Naive thymus-derived CD4-positive, alpha-beta T cell (primary cell): ENCODE measurements at regions of chr17 and their contacts with region 1.

Region 1: DNA sequence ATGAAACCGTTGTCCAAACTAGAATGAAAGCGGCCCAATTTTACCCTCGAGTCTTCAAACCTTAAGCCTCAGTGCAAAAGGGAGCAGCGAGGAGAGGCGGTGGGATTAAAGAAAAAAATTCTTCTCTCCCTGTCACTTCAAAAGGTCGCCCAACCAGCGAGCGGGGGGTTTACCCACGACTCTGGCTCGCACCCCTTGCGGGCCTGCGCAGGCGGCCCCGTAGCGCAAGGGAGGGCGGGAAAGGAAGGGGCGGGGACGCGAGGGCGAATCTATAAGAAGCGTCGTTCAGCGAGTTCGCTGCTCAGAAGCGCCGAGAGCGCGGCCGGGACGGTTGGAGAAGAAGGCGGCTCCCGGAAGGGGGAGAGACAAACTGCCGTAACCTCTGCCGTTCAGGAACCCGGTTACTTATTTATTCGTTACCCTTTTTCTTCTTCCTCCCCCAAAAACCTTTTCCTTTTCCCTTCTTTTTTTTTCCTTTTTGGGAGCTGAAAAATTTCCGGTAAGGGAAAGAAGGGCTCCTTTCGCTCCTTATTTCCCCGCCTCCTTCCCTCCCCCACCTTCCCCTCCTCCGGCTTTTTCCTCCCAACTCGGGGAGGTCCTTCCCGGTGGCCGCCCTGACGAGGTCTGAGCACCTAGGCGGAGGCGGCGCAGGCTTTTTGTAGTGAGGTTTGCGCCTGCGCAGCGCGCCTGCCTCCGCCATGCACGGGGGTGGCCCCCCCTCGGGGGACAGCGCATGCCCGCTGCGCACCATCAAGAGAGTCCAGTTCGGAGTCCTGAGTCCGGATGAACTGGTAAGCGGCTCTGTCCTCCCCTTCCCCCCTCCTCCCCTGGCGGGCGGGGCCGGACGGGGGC is at the start of gene POLR2A:
- DNase-seq: peak; percentile 97 to 99 (median 99)
- ATAC-seq: peak; percentile 80
- H3K4me3 ChIP-seq: peak within 1 kb of the TSS; percentile 100
- H3K4me3 Mint-ChIP-seq: peak within 1 kb of the TSS; percentile 86 to 100 (median 98)
- H3K27ac ChIP-seq: peak within 1 kb of the TSS; percentile 97
- H3K27ac Mint-ChIP-seq: peak within 1 kb of the TSS; percentile 99 to 100 (median 100)
- H3K4me1 ChIP-seq: peaks cover 38 to 55% of the 10 kb centered on the region in 2 donors
- H3K4me1 Mint-ChIP-seq: peaks cover 60 to 81% (median 72%) of the 10 kb centered on the region in 7 donors
- H3K27me3 ChIP-seq: no peaks in the 10 kb centered on the region
- H3K27me3 Mint-ChIP-seq: no peaks in the 10 kb centered on the region
- total RNA-seq, gene POLR2A: 165 to 501 (median 225) TPM

Region 2: DNA sequence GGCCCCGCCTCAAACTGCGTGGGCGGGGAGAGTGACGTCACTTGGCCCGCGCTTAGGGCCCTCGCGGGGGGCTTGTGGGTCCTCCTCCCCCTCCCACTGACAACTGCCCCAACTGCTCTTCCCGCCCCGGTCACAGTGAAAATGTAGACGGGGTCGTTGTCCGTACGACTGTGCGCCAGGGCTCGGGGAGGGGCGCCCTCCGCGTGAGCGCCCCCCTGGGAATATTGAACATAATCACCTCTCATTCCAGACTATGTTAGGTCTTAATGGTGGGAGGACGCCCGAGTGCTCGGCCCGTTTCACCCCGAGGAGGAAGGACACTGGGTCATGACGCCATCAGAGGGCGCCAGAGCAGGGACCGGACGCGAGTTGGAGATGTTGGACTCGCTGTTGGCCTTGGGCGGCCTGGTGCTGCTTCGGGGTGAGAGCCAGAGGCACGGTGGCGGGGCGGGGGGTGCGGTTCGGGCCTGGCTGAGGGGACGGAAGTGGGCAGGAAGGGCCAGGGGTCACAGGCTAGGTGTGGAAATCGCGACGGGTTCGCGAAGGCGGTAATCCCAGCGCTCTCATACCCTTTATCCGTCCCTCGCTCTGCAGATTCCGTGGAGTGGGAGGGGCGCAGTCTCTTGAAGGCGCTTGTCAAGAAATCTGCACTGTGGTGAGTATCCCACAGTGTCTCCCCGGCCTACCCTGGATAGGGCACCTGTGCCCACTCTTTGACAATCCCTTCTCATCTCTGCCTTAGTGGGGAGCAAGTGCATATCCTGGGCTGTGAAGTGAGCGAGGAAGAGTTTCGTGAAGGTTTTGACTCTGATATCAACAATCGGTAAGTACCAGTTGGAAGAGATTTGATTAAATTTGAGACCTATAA is 231.9 kb before region 1 on chr17 and contains the start of gene ELP5:
- CTCF ChIA-PET with region 1: no interaction called
- POLR2A ChIA-PET with region 1: interaction called, 4 read pairs
- intact Hi-C with region 1: loop called (anchors 1 kb)
- DNase-seq: peak in 5 of 9 donors; percentile 73 to 90 (median 83)
- ATAC-seq: peak; percentile 69
- H3K4me3 ChIP-seq: peak within 1 kb of the TSS; percentile 91
- H3K4me3 Mint-ChIP-seq: peak within 1 kb of the TSS; percentile 85 to 98 (median 96)
- H3K27ac ChIP-seq: peak within 1 kb of the TSS; percentile 94
- H3K27ac Mint-ChIP-seq: peak within 1 kb of the TSS; percentile 95 to 100 (median 99)
- H3K4me1 ChIP-seq: peaks cover 22 to 32% of the 10 kb centered on the region in 2 donors
- H3K4me1 Mint-ChIP-seq: peaks cover 29 to 51% (median 42%) of the 10 kb centered on the region in 7 donors
- H3K27me3 ChIP-seq: no peaks in the 10 kb centered on the region
- H3K27me3 Mint-ChIP-seq: peaks cover 0 to 4% (median 0%) of the 10 kb centered on the region in 5 donors
- total RNA-seq, gene ELP5: 26.9 to 49.1 (median 32.9) TPM

Region 3: GRCh38 chr17:7394452-7395191 is 89.7 kb before region 1 on chr17 and contains the start of gene PLSCR3:
- CTCF ChIA-PET with region 1: no interaction called
- POLR2A ChIA-PET with region 1: interaction called, 7 read pairs
- intact Hi-C with region 1: loop called in 1 of 2 experiments (anchors 2 kb)
- DNase-seq: peak; percentile 68 to 91 (median 82)
- ATAC-seq: peak; percentile 94
- H3K4me3 ChIP-seq: peak within 1 kb of the TSS; percentile 94
- H3K4me3 Mint-ChIP-seq: peak within 1 kb of the TSS; percentile 93 to 97 (median 95)
- H3K27ac ChIP-seq: peak within 1 kb of the TSS; percentile 87
- H3K27ac Mint-ChIP-seq: peak within 1 kb of the TSS; percentile 85 to 97 (median 92)
- H3K4me1 ChIP-seq: peaks cover 7 to 25% of the 10 kb centered on the region in 2 donors
- H3K4me1 Mint-ChIP-seq: peaks cover 25 to 46% (median 27%) of the 10 kb centered on the region in 7 donors
- H3K27me3 ChIP-seq: no peaks in the 10 kb centered on the region
- H3K27me3 Mint-ChIP-seq: no peaks in the 10 kb centered on the region
- total RNA-seq, gene PLSCR3: 74.8 to 142 (median 85.0) TPM

Region 4: DNA sequence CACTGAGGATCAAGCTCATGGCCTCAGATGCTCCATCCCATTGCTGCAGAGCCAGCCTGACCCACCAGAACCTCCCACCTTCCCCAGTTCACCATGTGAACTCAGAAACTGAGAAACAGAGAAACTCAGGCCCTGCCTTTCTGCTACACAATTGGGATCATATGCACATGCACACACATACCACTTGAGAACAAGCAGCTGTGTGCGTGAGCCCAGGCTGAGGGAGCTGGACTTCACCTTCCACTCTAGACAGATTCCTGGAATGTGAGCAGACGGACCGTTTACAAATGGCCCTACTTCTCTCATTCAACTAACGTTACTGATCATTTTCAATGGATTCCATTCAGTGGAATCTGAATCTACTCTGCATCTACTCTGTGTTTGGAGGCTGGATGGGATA is 60.6 kb before region 1 on chr17:
- CTCF ChIA-PET with region 1: no interaction called
- POLR2A ChIA-PET with region 1: no interaction called
- intact Hi-C with region 1: no loop called
- DNase-seq: no peak
- ATAC-seq: no peak
- H3K4me3 ChIP-seq: no peak overlapping the region
- H3K4me3 Mint-ChIP-seq: no peak overlapping the region
- H3K27ac ChIP-seq: no peak overlapping the region
- H3K27ac Mint-ChIP-seq: peak overlapping the region in 1 of 9 donors; percentile 72
- H3K4me1 ChIP-seq: no peaks in the 10 kb centered on the region
- H3K4me1 Mint-ChIP-seq: no peaks in the 10 kb centered on the region
- H3K27me3 ChIP-seq: no peaks in the 10 kb centered on the region
- H3K27me3 Mint-ChIP-seq: peaks cover 0 to 3% (median 0%) of the 10 kb centered on the region in 5 donors

Region 5: GRCh38 chr17:7460850-7461660 is 23.2 kb before region 1 on chr17:
- CTCF ChIA-PET with region 1: no interaction called
- POLR2A ChIA-PET with region 1: interaction called, 199 read pairs
- intact Hi-C with region 1: no loop called
- DNase-seq: no peak
- ATAC-seq: no peak
- H3K4me3 ChIP-seq: no peak overlapping the region
- H3K4me3 Mint-ChIP-seq: no peak overlapping the region
- H3K27ac ChIP-seq: no peak overlapping the region
- H3K27ac Mint-ChIP-seq: peak overlapping the region in 3 of 9 donors; percentile 18 to 84 (median 71)
- H3K4me1 ChIP-seq: peaks cover 8% of the 10 kb centered on the region in 2 donors
- H3K4me1 Mint-ChIP-seq: peaks cover 0 to 26% (median 19%) of the 10 kb centered on the region in 7 donors
- H3K27me3 ChIP-seq: no peaks in the 10 kb centered on the region
- H3K27me3 Mint-ChIP-seq: no peaks in the 10 kb centered on the region

Region 6: DNA sequence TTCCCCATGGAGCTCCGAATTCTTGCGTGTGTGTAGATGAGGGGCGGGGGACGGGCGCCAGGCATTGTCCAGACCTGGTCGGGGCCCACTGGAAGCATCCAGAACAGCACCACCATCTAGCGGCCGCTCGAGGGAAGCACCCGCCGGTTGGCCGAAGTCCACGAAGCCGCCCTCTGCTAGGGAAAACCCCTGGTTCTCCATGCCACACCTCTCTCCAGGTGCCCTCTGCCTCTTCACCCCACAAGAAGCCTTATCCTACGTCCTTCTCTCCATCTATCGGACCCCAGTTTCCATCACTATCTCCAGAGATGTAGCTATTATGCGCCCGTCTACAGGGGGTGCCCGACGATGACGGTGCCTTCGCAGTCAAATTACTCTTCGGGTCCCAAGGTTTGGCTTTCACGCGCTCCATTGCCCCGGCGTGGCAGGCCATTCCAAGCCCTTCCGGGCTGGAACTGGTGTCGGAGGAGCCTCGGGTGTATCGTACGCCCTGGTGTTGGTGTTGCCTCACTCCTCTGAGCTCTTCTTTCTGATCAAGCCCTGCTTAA is 76.8 kb after region 1 on chr17:
- CTCF ChIA-PET with region 1: interaction called, 3 read pairs
- POLR2A ChIA-PET with region 1: interaction called, 23 read pairs
- intact Hi-C with region 1: loop called (anchors 1 kb)
- DNase-seq: peak; percentile 60 to 86 (median 71)
- ATAC-seq: peak; percentile 76
- H3K4me3 ChIP-seq: peak overlapping the region; percentile 96
- H3K4me3 Mint-ChIP-seq: peak overlapping the region; percentile 87 to 97 (median 93)
- H3K27ac ChIP-seq: peak overlapping the region; percentile 92
- H3K27ac Mint-ChIP-seq: peak overlapping the region; percentile 90 to 100 (median 96)
- H3K4me1 ChIP-seq: peaks cover 17 to 54% of the 10 kb centered on the region in 2 donors
- H3K4me1 Mint-ChIP-seq: peaks cover 33 to 55% (median 49%) of the 10 kb centered on the region in 7 donors
- H3K27me3 ChIP-seq: no peaks in the 10 kb centered on the region
- H3K27me3 Mint-ChIP-seq: peaks cover 0 to 2% (median 0%) of the 10 kb centered on the region in 5 donors

Region 7: DNA sequence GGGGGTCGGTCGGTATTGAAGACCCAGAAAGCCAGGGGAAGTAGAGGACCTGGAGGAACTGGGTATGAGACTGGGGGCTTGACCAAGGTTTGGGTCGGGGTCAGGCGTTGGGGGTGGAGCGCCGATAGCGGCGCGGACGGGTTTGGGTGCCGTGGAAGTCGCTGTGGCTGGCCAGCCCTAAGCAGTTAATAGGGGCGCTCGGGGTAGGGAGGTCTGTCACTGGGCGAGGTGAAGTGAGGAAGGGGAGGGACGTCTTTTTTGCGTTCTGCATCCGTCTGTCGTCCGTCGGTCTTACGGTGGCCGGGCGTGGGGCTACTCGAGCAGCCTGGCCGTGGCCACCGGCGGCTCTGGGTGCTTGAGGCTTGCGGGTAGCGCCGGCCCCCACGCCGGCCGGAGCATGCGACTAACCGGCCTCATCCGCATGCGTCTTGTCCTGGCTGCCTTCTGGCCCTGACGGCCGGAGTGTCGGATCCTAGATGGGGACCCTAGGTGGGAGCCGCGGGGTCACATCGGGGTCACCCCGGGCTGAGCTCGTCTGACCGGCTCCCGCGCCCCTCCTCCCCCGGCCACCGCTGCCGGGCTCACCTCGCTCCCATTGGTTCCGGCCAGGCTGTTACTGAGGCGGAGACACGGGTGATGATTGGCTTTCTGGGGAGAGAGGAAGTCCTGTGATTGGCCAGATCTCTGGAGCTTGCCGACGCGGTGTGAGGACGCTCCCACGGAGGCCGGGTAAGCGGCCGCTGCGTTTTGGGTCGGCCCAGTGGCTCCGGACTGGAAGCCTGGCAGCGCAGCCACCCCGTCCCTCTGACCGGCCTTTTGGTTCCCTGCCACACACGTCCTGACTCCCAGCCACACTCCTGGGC is 360.2 kb after region 1 on chr17:
- CTCF ChIA-PET with region 1: no interaction called
- POLR2A ChIA-PET with region 1: no interaction called
- intact Hi-C with region 1: loop called (anchors 1 to 2 kb)
- DNase-seq: peak; percentile 74 to 87 (median 79)
- ATAC-seq: peak; percentile 42
- H3K4me3 ChIP-seq: peak overlapping the region; percentile 84
- H3K4me3 Mint-ChIP-seq: peak overlapping the region; percentile 85 to 99 (median 94)
- H3K27ac ChIP-seq: peak overlapping the region; percentile 100
- H3K27ac Mint-ChIP-seq: peak overlapping the region; percentile 90 to 100 (median 99)
- H3K4me1 ChIP-seq: peaks cover 11 to 26% of the 10 kb centered on the region in 2 donors
- H3K4me1 Mint-ChIP-seq: peaks cover 19 to 41% (median 29%) of the 10 kb centered on the region in 7 donors
- H3K27me3 ChIP-seq: no peaks in the 10 kb centered on the region
- H3K27me3 Mint-ChIP-seq: peaks cover 0 to 2% (median 0%) of the 10 kb centered on the region in 5 donors